ENCODE measurements at regions of chr17 and their contacts with region 1.

Region 1: DNA sequence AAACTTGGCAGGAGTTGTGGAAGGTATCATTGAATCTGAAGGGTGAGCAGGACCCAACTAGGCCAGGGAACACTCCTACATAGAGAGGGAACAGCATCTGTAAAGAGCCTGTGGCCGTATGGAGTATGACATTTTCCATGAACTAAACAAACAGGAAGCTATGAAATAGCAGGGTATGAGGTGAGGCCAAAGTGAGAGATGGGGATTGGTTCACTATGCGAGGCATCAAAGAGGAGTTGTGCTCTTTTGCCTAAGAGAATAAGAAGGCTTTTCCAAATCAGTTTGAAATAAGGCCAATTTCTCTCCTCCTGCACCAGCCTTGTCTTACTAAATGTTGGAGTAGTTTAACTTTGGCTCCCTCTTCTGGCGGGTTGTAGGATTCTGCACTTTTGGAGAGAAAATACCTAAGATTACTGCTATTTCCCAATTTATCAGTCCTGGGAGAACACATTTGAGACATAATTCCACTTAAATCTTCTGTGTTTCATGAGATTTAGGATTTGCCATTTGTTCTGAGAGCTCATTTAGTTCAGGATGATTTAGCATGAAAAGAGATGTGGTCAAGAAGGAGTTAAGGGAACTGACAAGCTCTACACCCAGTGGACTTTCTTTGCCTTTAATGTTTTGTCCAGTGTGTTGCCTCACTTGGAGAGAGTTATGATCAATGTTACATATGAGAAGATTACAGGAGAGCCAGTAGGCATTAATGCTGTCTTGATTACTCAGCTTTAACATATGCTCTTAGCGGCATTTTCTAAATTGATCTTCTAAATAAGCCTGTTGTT is 55.4 kb downstream of the TNRC6C start:
- DNase-seq: peak; percentile 69
- H3K4me3 ChIP-seq: no peak overlapping the region
- H3K27ac ChIP-seq: no peak overlapping the region
- H3K4me1 ChIP-seq: no peaks in the 10 kb centered on the region
- H3K27me3 ChIP-seq: no peaks in the 10 kb centered on the region
- CTCF ChIP-seq: peak; percentile 74

Region 2: DNA sequence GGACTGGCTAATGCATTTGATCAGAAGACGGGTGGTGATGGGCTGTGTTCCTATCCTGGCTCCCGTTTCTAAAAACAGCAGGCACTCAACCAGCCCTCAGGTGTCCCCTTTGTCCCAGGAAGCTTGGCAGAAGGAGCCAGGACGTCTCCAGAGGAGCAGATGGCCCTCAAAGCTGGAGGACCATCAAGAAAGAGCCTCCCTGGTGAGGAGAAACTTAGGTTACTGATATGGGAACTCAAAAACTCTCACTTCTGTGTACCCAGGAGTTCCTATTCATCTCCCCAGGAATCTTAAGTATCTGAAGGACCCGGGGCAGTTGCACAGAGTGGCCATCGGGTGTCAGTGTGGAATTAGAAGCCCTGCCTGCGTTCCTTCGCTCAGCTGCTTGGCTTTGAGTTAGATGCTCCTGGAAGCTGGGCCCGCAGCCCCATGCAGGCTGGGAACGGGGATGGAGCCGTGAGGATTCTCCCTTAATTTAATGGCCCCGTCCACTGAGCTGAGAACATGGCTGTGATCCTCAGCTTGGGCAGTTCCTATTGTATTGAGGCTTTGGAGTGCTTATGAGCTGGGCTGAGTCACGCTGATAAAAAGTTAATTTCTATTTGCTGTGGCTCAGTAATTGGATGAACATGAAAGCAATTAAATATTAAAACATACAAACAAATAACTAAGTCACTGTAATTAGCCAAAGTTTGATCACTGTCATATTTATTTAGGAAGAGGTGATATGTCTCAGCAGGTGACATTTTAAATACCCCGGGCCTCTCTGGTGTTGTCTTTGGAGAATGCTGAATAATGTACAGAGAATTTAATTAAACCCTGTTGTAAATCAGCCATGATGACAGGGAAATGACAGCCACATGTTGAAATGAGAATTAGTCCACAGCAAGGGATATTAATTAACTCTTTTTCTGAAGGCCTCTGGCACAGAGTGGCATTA is 471.1 kb before region 1 on chr17:
- intact Hi-C with region 1: loop called (anchors 1 kb)
- DNase-seq: peak; percentile 83
- H3K4me3 ChIP-seq: no peak overlapping the region
- H3K27ac ChIP-seq: no peak overlapping the region
- H3K4me1 ChIP-seq: peaks cover 9% of the 10 kb centered on the region
- H3K27me3 ChIP-seq: no peaks in the 10 kb centered on the region
- CTCF ChIP-seq: peak; percentile 82

Region 3: DNA sequence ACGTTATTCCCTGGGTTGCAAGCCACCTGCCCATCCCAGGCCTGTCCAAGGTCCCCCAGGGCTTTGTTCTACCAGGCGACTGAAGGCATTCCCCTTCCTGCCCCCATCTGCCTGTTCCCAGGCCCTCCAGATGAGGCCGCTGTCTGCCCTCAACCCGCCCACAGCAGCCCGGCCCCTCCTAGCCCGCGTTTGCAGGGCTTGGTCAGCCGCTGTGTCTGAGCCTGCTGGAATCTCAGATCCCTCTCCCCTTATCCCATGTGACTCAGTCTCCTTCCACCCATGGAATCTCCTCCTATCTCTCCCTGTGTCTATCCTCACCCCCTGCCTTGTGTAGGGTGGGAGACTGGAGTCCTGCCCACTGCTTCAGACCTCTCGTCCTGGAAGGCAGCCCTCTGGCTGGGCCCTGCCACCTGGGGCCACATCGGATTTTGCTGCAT is 241.4 kb before region 1 on chr17:
- intact Hi-C with region 1: loop called (anchors 2 kb)
- DNase-seq: peak; percentile 65
- H3K4me3 ChIP-seq: no peak overlapping the region
- H3K27ac ChIP-seq: no peak overlapping the region
- H3K4me1 ChIP-seq: no peaks in the 10 kb centered on the region
- H3K27me3 ChIP-seq: no peaks in the 10 kb centered on the region
- CTCF ChIP-seq: peak; percentile 82

Region 4: GRCh38 chr17:77914385-77915254 is 99.3 kb before region 1 on chr17:
- intact Hi-C with region 1: loop called (anchors 5 kb)
- DNase-seq: no peak
- H3K4me3 ChIP-seq: no peak overlapping the region
- H3K27ac ChIP-seq: no peak overlapping the region
- H3K4me1 ChIP-seq: no peaks in the 10 kb centered on the region
- H3K27me3 ChIP-seq: peaks cover 20% of the 10 kb centered on the region
- CTCF ChIP-seq: no peak

Region 5: GRCh38 chr17:77957857-77958715 is 55.8 kb before region 1 on chr17 and contains the start of gene TNRC6C:
- intact Hi-C with region 1: no loop called
- DNase-seq: peak; percentile 99
- H3K4me3 ChIP-seq: peak within 1 kb of the TSS; percentile 74
- H3K27ac ChIP-seq: peak within 1 kb of the TSS; percentile 49
- H3K4me1 ChIP-seq: no peaks in the 10 kb centered on the region
- H3K27me3 ChIP-seq: no peaks in the 10 kb centered on the region
- CTCF ChIP-seq: no peak
- total RNA-seq, gene TNRC6C: 8.9 to 9.0 TPM

Region 6: DNA sequence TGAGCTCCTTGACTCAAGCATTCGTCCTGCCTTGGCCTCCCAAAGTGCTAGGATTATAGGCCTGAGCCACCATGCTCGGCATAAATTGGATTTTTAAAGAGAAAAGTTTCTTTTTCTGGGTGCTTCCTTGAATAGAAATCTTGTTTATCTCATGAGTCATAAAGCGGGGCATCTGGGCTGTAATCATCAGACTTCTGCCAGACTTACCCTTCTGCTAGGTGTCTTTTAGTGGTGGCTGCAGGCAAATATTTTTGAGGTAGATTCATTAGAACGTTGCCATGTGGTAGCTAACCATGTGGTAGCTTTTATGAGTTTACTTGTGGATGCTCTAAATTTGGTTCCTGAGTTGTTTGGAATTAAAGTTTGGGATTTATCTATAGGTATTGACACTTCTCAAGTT is 378.0 kb after region 1 on chr17:
- intact Hi-C with region 1: no loop called
- DNase-seq: no peak
- H3K4me3 ChIP-seq: no peak overlapping the region
- H3K27ac ChIP-seq: peak overlapping the region; percentile 8
- H3K4me1 ChIP-seq: no peaks in the 10 kb centered on the region
- H3K27me3 ChIP-seq: no peaks in the 10 kb centered on the region
- CTCF ChIP-seq: no peak